ENCODE measurements at regions of chr6 and their contacts with region 1.

Region 1: DNA sequence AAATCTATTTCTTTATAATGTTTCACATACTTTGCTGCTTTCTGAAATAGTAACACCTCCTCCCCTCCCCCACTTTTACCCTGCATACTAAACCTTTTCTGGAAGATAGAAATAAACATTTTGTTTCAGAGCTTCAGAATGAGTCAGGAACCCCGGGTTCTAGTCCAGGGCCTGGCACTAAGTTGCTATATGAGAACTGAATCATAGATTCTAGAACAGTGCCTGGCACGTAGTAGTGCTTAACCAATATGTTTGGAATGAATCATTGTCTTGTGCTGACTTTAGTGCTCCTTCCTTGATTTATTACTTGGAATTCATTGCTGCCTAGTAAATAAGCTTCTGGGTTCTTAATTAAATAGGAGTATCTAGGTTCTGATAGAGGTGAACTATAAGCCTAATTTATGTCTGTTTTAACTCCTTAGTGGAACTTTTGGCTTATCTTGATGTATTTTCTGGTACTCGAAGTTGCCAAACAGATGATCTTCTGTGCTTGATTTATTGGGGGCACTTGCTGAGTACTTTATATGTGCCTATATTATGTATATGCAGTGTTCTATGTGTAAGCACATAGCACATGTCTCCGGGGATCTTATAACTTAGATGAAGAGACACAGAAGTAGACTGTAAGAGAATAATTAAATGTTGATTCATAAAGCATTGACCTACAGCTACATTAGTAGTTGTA is 18.6 kb downstream of the TAB2 start:
- DNase-seq: peak; percentile 81
- ATAC-seq: peak; percentile 35
- H3K4me3 ChIP-seq: no peak overlapping the region
- H3K27ac ChIP-seq: peak overlapping the region; percentile 91
- H3K4me1 ChIP-seq: peaks cover 75% of the 10 kb centered on the region
- H3K27me3 ChIP-seq: no peaks in the 10 kb centered on the region
- CTCF ChIP-seq: no peak

Region 2: GRCh38 chr6:149324428-149324827 is 11.6 kb before region 1 on chr6:
- CTCF ChIA-PET with region 1: interaction called, 10 read pairs
- POLR2A ChIA-PET with region 1: interaction called, 3 read pairs
- intact Hi-C with region 1: no loop called
- DNase-seq: no peak
- ATAC-seq: no peak
- H3K4me3 ChIP-seq: no peak overlapping the region
- H3K27ac ChIP-seq: no peak overlapping the region
- H3K4me1 ChIP-seq: peaks cover 43% of the 10 kb centered on the region
- H3K27me3 ChIP-seq: no peaks in the 10 kb centered on the region
- CTCF ChIP-seq: no peak

Region 3: GRCh38 chr6:149380523-149380922 is 44.5 kb after region 1 on chr6:
- CTCF ChIA-PET with region 1: no interaction called
- POLR2A ChIA-PET with region 1: interaction called, 5 read pairs
- intact Hi-C with region 1: loop called (anchors 5 kb)
- DNase-seq: peak; percentile 12
- ATAC-seq: no peak
- H3K4me3 ChIP-seq: no peak overlapping the region
- H3K27ac ChIP-seq: no peak overlapping the region
- H3K4me1 ChIP-seq: no peaks in the 10 kb centered on the region
- H3K27me3 ChIP-seq: no peaks in the 10 kb centered on the region
- CTCF ChIP-seq: no peak

Region 4: DNA sequence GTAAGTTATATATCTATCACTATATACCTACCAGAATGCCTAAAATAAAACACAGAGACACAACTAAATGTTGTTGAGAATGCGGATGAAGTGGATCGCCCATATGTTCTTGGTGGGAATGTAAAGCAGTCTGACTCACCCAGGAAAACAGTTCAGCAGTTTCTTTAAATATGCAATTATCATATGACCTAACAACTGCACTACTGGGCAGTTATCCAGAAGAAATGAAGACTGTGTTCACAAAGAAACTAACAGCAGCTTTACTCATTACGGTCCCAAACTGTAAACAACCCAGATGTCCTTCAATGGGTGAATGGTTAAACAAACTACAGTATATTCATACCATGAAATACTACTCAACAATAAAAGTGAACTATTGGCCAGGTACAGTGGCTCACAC is 163.0 kb after region 1 on chr6:
- CTCF ChIA-PET with region 1: no interaction called
- POLR2A ChIA-PET with region 1: no interaction called
- intact Hi-C with region 1: loop called (anchors 10 kb)
- DNase-seq: peak; percentile 92
- ATAC-seq: peak; percentile 79
- H3K4me3 ChIP-seq: no peak overlapping the region
- H3K27ac ChIP-seq: peak overlapping the region; percentile 75
- H3K4me1 ChIP-seq: peaks cover 29% of the 10 kb centered on the region
- H3K27me3 ChIP-seq: no peaks in the 10 kb centered on the region
- CTCF ChIP-seq: no peak

Region 5: DNA sequence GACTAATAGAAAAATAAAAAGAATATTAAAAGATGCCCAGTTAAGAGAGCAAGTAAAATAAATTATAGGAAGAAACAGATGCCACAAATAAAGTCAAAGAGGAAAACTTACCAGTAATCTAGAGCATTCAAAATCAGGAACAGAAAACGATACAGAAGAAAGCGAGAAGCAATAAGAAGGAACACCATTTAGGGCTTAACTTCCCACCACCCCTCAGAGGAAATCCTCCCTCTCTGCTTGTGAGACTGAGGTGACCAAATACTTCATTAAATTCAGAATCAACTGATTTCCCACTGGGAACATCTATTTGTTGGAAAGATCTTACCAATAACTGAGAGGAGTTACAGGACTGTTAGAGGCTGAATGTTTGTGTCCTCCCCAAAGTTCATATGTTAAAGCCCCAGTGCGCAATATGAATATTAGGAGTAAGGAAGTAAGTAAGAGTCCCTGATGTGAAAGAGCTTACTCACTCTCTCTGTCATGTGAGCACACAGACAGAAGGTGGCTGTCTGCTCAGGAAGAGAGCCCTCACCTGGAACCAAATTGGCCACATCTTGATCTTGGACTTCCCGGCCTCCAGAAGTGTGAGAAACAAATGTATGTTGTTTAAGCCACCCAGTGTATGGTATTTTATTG is 292.9 kb after region 1 on chr6:
- CTCF ChIA-PET with region 1: no interaction called
- POLR2A ChIA-PET with region 1: no interaction called
- intact Hi-C with region 1: no loop called
- DNase-seq: peak; percentile 2
- ATAC-seq: peak; percentile 35; the same call in 1 of the 2 replicates
- H3K4me3 ChIP-seq: no peak overlapping the region
- H3K27ac ChIP-seq: no peak overlapping the region
- H3K4me1 ChIP-seq: no peaks in the 10 kb centered on the region
- H3K27me3 ChIP-seq: no peaks in the 10 kb centered on the region
- CTCF ChIP-seq: no peak

Measured in PC-3 (cell line).